Activated CD8-positive, alpha-beta T cell treated with anti-CD3 and anti-CD28 coated beads, Interleukin-2, amount 10 ng/mL, durations not matched to agents 7 days and 5 days (primary cell): ENCODE measurements at regions of chr15 and their contacts with region 1.

Region 1: GRCh38 chr15:40367686-40368611 is 9.9 kb downstream of the DISP2 start:
- DNase-seq: peak; percentile 91
- ATAC-seq: peak; percentile 95
- H3K4me3 Mint-ChIP-seq: peak overlapping the region; percentile 77
- H3K27ac Mint-ChIP-seq: peak overlapping the region; percentile 85
- H3K4me1 Mint-ChIP-seq: peaks cover 33% of the 10 kb centered on the region
- H3K27me3 Mint-ChIP-seq: peaks cover 7% of the 10 kb centered on the region

Region 2: DNA sequence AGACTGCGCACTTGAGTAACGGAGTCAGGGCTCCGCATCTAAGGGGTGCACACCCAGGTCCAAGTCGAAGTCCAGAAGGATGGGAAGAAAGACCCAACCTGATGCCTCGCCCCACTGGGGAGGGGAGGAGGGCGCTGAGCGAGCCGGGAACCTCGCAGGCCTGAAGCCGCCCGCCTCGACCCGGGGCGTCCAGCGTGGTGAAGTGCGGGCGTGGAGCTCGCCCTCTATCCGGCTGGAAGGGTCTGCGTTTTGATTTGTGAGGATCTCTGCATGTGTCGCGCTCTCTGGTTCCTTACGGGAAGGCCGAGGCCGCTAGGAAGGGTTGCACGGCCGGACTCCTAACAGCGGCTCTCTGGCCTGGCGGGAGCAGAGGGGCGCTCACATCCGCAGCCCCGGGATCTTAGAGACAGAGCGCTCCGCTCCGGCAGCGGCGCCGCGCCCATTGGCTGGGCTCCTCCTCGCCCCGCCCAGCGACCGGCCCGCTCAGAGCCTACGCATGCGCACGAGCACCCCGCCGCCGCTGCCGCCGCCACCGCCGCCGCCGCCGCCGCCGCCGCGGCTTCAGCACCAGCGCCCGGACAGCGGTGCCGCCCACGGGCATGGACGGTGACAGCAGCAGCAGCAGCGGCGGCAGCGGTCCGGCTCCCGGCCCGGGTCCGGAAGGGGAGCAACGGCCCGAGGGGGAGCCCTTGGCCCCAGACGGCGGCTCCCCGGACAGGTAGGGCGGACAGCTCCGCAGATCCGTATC is 10.1 kb before region 1 on chr15 and contains the start of gene DISP2:
- CTCF ChIA-PET with region 1: interaction called, 19 read pairs
- POLR2A ChIA-PET with region 1: no interaction called
- DNase-seq: peak; percentile 90
- ATAC-seq: peak; percentile 95
- H3K4me3 Mint-ChIP-seq: peak within 1 kb of the TSS; percentile 78
- H3K27ac Mint-ChIP-seq: no peak within 1 kb of the TSS
- H3K4me1 Mint-ChIP-seq: peaks cover 12% of the 10 kb centered on the region
- H3K27me3 Mint-ChIP-seq: peaks cover 11% of the 10 kb centered on the region
- total RNA-seq, gene DISP2: 0.82 to 2.6 TPM

Region 3: GRCh38 chr15:40382580-40383456 is 14.9 kb after region 1 on chr15 and contains the start of gene KNSTRN:
- CTCF ChIA-PET with region 1: interaction called, 35 read pairs
- POLR2A ChIA-PET with region 1: interaction called, 6 read pairs
- DNase-seq: peak; percentile 96
- ATAC-seq: peak; percentile 99
- H3K4me3 Mint-ChIP-seq: peak within 1 kb of the TSS; percentile 92
- H3K27ac Mint-ChIP-seq: peak within 1 kb of the TSS; percentile 84
- H3K4me1 Mint-ChIP-seq: peaks cover 25% of the 10 kb centered on the region
- H3K27me3 Mint-ChIP-seq: peaks cover 9% of the 10 kb centered on the region
- total RNA-seq, gene KNSTRN: 71.1 to 74.1 TPM

Region 4: GRCh38 chr15:40398413-40398873 is 30.5 kb after region 1 on chr15:
- CTCF ChIA-PET with region 1: interaction called, 34 read pairs
- POLR2A ChIA-PET with region 1: interaction called, 3 read pairs
- DNase-seq: peak; percentile 46
- ATAC-seq: peak; percentile 86
- H3K4me3 Mint-ChIP-seq: peak overlapping the region; percentile 61
- H3K27ac Mint-ChIP-seq: peak overlapping the region; percentile 84
- H3K4me1 Mint-ChIP-seq: peaks cover 31% of the 10 kb centered on the region
- H3K27me3 Mint-ChIP-seq: no peaks in the 10 kb centered on the region

Region 5: DNA sequence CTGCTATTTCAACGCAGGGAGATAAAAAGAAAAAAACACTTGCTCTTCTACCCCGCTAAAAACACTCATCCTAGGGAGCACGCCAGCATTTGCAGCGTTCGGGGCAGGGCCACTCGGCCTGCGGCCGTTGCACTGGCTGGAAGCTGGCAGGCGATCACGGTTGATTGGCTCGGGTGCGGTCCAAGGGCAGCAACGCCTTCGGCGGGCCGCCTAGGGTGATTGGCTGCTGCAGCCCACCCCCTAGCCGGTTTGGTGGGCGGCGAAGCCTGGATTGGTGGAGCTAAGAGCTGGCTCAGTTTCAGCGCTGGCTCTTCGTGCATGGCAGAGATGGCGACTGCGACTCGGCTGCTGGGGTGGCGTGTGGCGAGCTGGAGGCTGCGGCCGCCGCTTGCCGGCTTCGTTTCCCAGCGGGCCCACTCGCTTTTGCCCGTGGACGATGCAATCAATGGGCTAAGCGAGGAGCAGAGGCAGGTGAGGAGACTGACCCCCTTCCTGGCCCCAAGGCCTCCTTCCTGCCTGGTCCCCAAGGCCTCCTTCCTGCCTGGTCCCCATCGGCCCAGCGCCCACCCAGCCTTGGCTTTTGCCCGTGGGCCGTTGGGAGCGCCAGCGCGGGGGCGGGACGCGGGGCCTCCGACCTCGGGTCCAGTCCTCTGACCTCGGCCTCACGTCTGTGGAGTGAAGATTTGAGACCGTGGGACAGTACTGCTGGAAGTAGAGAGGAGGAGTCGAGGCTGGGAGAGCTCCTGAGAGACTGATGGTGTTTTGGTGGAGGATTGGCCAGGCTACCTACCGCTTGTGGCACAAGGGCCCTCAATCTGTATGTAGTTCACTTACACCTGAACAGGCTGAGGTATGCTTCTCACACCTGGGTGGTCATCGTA is 37.8 kb after region 1 on chr15 and contains the start of gene IVD:
- CTCF ChIA-PET with region 1: interaction called, 34 read pairs
- POLR2A ChIA-PET with region 1: interaction called, 7 read pairs
- DNase-seq: peak; percentile 95
- ATAC-seq: peak; percentile 100
- H3K4me3 Mint-ChIP-seq: peak within 1 kb of the TSS; percentile 86
- H3K27ac Mint-ChIP-seq: peak within 1 kb of the TSS; percentile 95
- H3K4me1 Mint-ChIP-seq: peaks cover 45% of the 10 kb centered on the region
- H3K27me3 Mint-ChIP-seq: no peaks in the 10 kb centered on the region
- total RNA-seq, gene IVD: 77.7 to 79.9 TPM

Region 6: DNA sequence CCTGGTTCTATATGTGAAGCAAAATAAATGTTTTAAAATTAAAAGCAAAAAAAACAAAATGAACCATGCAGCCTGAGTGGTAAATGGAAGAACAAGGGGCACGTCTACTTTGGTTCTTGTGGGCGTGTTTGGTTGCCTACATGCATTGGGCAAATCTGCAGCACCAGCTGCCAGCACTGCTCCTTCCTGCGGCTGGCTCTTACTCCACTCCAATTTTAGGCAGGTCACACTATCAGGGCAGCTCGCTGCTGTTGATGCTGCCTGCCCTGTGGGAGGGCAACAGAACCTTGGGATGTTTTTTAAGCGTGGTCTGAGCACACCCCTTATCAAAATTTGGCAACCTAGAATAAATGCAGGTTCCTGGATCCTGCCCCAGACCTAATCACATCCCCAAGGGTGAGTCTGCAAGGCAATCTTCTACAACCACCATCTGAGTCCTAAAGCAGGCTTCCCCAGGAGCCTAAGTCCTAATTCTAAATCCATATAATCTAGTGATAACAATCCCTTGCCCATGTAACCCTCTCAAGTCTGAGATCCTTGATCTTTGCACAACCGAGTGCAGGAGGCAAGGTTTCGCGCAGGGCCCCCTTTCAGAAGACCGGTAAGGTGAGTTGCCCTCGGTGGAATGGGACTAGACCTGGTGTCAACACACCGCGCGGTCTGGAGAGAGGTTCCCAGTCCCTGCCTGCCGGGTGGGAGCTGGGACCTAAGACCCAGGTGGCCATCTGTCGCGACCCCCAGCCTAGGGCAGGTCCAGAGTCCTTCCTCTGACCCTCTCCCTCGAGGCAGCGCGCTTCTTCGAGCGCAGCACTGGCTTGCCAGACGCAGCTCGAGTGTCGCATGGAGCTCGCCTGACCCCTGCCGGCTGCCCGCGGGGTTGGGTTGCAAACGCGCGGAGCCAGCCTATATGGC is 53.6 kb after region 1 on chr15:
- CTCF ChIA-PET with region 1: interaction called, 109 read pairs
- POLR2A ChIA-PET with region 1: interaction called, 6 read pairs
- DNase-seq: peak; percentile 86
- ATAC-seq: peak; percentile 99
- H3K4me3 Mint-ChIP-seq: no peak overlapping the region
- H3K27ac Mint-ChIP-seq: no peak overlapping the region
- H3K4me1 Mint-ChIP-seq: peaks cover 8% of the 10 kb centered on the region
- H3K27me3 Mint-ChIP-seq: no peaks in the 10 kb centered on the region